ENCODE measurements at regions of chr11 and their contacts with region 1.

Region 1: DNA sequence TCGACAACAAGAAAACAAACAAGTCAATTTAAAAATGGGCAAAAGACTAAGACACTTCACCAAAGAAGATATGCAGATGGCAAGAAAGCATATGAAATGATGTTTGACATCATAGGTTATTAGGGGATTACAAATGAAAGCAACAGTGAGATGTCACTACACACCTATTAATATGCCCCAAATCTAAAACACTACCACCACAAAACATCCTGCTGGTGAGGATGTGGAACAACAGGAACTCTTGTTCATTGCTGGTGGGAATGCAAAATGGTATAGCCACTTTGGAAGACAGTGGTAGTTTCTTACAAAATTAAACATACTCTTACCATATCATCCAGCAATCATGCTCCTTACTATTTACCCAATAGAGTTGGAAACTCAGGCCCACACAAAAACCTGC is 29.0 kb downstream of the PRRG4 start:
- H3K4me3 ChIP-seq: no peak overlapping the region
- H3K27ac ChIP-seq: no peak overlapping the region
- H3K4me1 ChIP-seq: no peaks in the 10 kb centered on the region
- CTCF ChIP-seq: no peak

Region 2: DNA sequence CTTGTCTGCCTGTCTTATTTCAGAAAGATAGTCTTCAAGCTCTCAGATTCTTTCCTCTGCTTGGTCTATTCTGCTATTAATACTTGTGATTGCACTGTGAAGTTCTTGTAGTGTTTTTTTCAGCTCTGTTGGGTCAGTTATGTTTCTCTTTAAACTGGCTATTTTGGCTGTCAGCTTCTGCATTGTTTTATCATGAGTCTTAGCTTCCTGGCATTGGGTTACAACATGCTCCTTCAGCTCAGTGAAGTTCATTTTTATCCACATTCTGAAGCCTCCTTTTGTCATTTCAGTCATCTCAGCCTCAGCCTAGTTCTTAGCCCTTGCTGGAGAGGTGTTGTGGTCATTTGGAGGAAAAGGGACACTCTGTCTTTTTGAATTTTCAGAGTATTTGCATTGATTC is 141.4 kb after region 1 on chr11:
- CTCF ChIA-PET with region 1: interaction called, 10 read pairs
- POLR2A ChIA-PET with region 1: no interaction called
- H3K4me3 ChIP-seq: no peak overlapping the region
- H3K27ac ChIP-seq: no peak overlapping the region
- H3K4me1 ChIP-seq: no peaks in the 10 kb centered on the region
- CTCF ChIP-seq: no peak

Measured in HEK293 (cell line).